Posterior cingulate gyrus (tissue), 11 donors: ENCODE measurements at regions of chr19 and their contacts with region 1.

Region 1: GRCh38 chr19:5690125-5690954 is at the start of gene RPL36:
- DNase-seq: peak; percentile 93 to 99 (median 96)

Region 2: DNA sequence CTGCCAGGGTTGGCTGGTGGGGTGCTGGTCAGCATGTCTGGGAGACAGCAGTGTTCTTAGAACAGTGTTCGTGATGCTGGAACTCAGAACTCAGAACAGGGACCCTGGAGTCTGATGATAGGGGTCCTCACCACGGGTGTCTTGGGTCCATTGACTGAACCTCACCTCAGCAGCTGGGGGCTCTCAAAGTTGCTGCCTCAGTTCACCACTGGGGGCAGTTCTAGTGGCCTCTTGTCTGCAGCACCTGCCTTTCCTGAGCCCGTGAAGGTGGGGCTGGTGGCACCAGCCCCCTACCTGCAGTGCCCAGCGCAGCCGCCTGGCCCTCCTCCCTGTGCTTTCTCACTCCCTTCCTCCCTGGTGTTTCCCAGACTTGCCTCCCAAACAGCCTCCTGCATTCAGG is 39.0 kb before region 1 on chr19:
- intact Hi-C with region 1: no loop called
- DNase-seq: no peak

Region 3: GRCh38 chr19:5719961-5720790 is 29.8 kb after region 1 on chr19 and contains the starts of genes CATSPERD and LONP1:
- intact Hi-C with region 1: loop called (anchors 1 kb)
- DNase-seq: peak; percentile 96 to 100 (median 98)

Region 4: GRCh38 chr19:5738426-5738825 is 48.1 kb after region 1 on chr19:
- intact Hi-C with region 1: no loop called
- DNase-seq: peak in 1 of 10 donors; percentile 29